ENCODE measurements at regions of chr11 and their contacts with region 1.

Region 1: GRCh38 chr11:85664615-85665481 is at the start of gene CREBZF:
- DNase-seq: peak; percentile 99 to 100
- H3K4me3 ChIP-seq: peak within 1 kb of the TSS; percentile 91
- H3K4me3 Mint-ChIP-seq: peak within 1 kb of the TSS; percentile 91
- H3K27ac Mint-ChIP-seq: peak within 1 kb of the TSS; percentile 87
- H3K4me1 ChIP-seq: 0 out of 2 replicates have a peak, but pooled peaks cover 9% of the 10 kb centered on the region
- H3K4me1 Mint-ChIP-seq: peaks cover 25% of the 10 kb centered on the region
- H3K27me3 ChIP-seq: no peaks in the 10 kb centered on the region
- H3K27me3 Mint-ChIP-seq: no peaks in the 10 kb centered on the region
- CTCF ChIP-seq: no peak
- total RNA-seq, gene CREBZF: 99.4 and 101 TPM in 2 replicates

Region 2: GRCh38 chr11:85627998-85628770 is 36.7 kb before region 1 on chr11 and contains the start of gene TMEM126B:
- CTCF ChIA-PET with region 1: interaction called, 13 read pairs
- POLR2A ChIA-PET with region 1: interaction called, 16 read pairs
- intact Hi-C with region 1: loop called (anchors 1 kb)
- DNase-seq: peak; percentile 99 to 100
- H3K4me3 ChIP-seq: peak within 1 kb of the TSS; percentile 58
- H3K4me3 Mint-ChIP-seq: peak within 1 kb of the TSS; percentile 98
- H3K27ac Mint-ChIP-seq: peak within 1 kb of the TSS; percentile 96
- H3K4me1 ChIP-seq: peaks cover 8% of the 10 kb centered on the region; the same call in 1 of the 2 replicates
- H3K4me1 Mint-ChIP-seq: peaks cover 13% of the 10 kb centered on the region
- H3K27me3 ChIP-seq: no peaks in the 10 kb centered on the region
- H3K27me3 Mint-ChIP-seq: no peaks in the 10 kb centered on the region
- CTCF ChIP-seq: no peak
- total RNA-seq, gene TMEM126B: 141 and 144 TPM in 2 replicates

Region 3: DNA sequence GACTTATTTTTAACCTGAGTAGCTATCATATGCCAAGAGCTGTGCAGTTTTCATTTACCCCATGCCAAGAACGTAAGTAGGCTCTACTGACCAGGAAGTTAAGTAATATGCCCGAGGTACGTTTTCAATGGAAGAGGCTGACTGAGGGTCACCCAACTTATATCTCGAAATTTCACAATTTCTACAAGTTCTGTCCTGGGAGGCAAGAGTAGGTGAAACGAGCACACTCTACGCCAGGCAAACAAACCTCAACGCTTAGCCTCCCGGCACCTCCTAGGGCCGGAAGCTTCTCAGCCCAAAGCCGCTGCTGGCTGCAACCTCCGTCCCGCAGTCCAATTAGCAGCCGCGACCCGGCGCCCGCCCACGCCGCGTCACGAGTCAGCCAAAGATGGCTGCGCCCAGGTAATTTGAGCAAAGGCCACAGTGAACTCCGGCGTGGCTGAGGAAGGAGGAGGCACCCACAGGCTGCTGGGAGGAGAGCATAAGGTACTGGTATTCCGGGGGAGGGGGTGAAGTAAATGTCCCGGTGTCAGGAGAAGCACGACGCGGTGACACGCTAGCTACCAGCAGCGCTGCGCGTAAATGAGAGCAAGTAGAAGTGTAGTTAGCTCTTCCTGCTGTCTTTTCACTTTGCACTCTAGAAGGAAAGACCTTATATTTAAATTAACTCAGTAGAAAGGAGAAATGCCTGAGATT is 17.1 kb before region 1 on chr11 and contains the start of gene TMEM126A:
- CTCF ChIA-PET with region 1: interaction called, 7 read pairs
- POLR2A ChIA-PET with region 1: interaction called, 22 read pairs
- intact Hi-C with region 1: loop called (anchors 1 kb)
- DNase-seq: peak; percentile 99
- H3K4me3 ChIP-seq: peak within 1 kb of the TSS; percentile 49
- H3K4me3 Mint-ChIP-seq: peak within 1 kb of the TSS; percentile 81
- H3K27ac Mint-ChIP-seq: peak within 1 kb of the TSS; percentile 87
- H3K4me1 ChIP-seq: peaks cover 22% of the 10 kb centered on the region
- H3K4me1 Mint-ChIP-seq: peaks cover 36% of the 10 kb centered on the region
- H3K27me3 ChIP-seq: no peaks in the 10 kb centered on the region
- H3K27me3 Mint-ChIP-seq: no peaks in the 10 kb centered on the region
- CTCF ChIP-seq: no peak
- total RNA-seq, gene TMEM126A: 35.5 and 37.7 TPM in 2 replicates

Region 4: GRCh38 chr11:85989746-85990145 is 324.9 kb after region 1 on chr11:
- CTCF ChIA-PET with region 1: no interaction called
- POLR2A ChIA-PET with region 1: interaction called, 10 read pairs
- intact Hi-C with region 1: no loop called
- DNase-seq: no peak
- H3K4me3 ChIP-seq: no peak overlapping the region
- H3K4me3 Mint-ChIP-seq: no peak overlapping the region
- H3K27ac Mint-ChIP-seq: no peak overlapping the region
- H3K4me1 ChIP-seq: no peaks in the 10 kb centered on the region
- H3K4me1 Mint-ChIP-seq: no peaks in the 10 kb centered on the region
- H3K27me3 ChIP-seq: no peaks in the 10 kb centered on the region
- H3K27me3 Mint-ChIP-seq: no peaks in the 10 kb centered on the region
- CTCF ChIP-seq: no peak

Region 5: GRCh38 chr11:86081455-86081854 is 416.6 kb after region 1 on chr11:
- CTCF ChIA-PET with region 1: no interaction called
- POLR2A ChIA-PET with region 1: no interaction called
- intact Hi-C with region 1: no loop called
- DNase-seq: no peak
- H3K4me3 ChIP-seq: no peak overlapping the region
- H3K4me3 Mint-ChIP-seq: no peak overlapping the region
- H3K27ac Mint-ChIP-seq: no peak overlapping the region
- H3K4me1 ChIP-seq: peaks cover 16% of the 10 kb centered on the region
- H3K4me1 Mint-ChIP-seq: peaks cover 16% of the 10 kb centered on the region
- H3K27me3 ChIP-seq: no peaks in the 10 kb centered on the region
- H3K27me3 Mint-ChIP-seq: no peaks in the 10 kb centered on the region
- CTCF ChIP-seq: no peak

Region 6: GRCh38 chr11:86244522-86245368 is 579.9 kb after region 1 on chr11 and contains the start of gene EED:
- CTCF ChIA-PET with region 1: no interaction called
- POLR2A ChIA-PET with region 1: no interaction called
- intact Hi-C with region 1: loop called (anchors 10 kb)
- DNase-seq: peak; percentile 99 to 100
- H3K4me3 ChIP-seq: peak within 1 kb of the TSS; percentile 74
- H3K4me3 Mint-ChIP-seq: no peak within 1 kb of the TSS
- H3K27ac Mint-ChIP-seq: no peak within 1 kb of the TSS
- H3K4me1 ChIP-seq: peaks cover 35% of the 10 kb centered on the region
- H3K4me1 Mint-ChIP-seq: peaks cover 45% of the 10 kb centered on the region
- H3K27me3 ChIP-seq: no peaks in the 10 kb centered on the region
- H3K27me3 Mint-ChIP-seq: no peaks in the 10 kb centered on the region
- CTCF ChIP-seq: no peak
- total RNA-seq, gene EED: 68.3 and 75.5 TPM in 2 replicates

Region 7: GRCh38 chr11:86302100-86302793 is 637.4 kb after region 1 on chr11 and contains the start of gene HIKESHI:
- CTCF ChIA-PET with region 1: no interaction called
- POLR2A ChIA-PET with region 1: no interaction called
- intact Hi-C with region 1: loop called (anchors 10 kb)
- DNase-seq: peak; percentile 98 to 99
- H3K4me3 ChIP-seq: peak within 1 kb of the TSS; percentile 58
- H3K4me3 Mint-ChIP-seq: peak within 1 kb of the TSS; percentile 98
- H3K27ac Mint-ChIP-seq: peak within 1 kb of the TSS; percentile 99
- H3K4me1 ChIP-seq: 0 out of 2 replicates have a peak, but pooled peaks cover 10% of the 10 kb centered on the region
- H3K4me1 Mint-ChIP-seq: peaks cover 8% of the 10 kb centered on the region
- H3K27me3 ChIP-seq: no peaks in the 10 kb centered on the region
- H3K27me3 Mint-ChIP-seq: no peaks in the 10 kb centered on the region
- CTCF ChIP-seq: no peak
- total RNA-seq, gene HIKESHI: 81.3 and 82.0 TPM in 2 replicates

Measured in Caco-2 (cell line).